ENCODE measurements at regions of chr12 and their contacts with region 1.

Region 1: DNA sequence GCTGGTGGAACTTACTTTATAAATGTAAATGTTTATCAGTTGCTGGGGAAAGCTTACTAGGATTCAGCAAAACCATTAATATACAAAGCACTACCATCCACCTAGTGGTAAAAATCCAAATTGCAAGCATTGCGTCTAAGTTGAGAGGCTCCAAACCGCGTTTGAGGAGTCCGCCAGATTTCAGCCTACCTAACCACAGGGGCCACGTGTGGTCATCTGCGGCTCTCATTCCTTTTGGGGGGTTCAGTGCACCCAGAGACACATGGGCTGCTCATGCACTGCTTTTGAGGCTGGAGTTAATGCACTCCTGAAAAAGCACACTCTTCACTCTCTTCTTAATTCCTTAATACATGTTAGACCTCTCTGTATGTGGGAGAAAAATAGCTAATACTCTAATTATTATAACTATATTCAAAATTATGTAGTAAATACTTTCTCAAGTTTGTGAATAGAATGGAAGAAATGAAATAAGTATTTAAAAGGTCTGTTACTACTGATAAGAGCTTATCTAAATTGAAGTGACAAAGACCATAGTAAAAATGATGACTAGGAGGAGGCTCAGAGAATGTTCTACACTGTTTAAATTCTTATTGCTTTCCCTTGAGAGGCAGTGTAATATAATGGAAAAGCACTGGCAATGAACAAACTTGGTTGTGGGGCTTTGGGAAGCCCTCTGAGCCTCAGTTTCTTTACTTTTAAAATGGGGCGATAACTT is 41.4 kb upstream of the MANSC4 start:
- DNase-seq: peak; percentile 48
- ATAC-seq: peak; percentile 61
- H3K4me3 ChIP-seq: no peak overlapping the region
- H3K27ac ChIP-seq: no peak overlapping the region; the same call in 1 of the 2 replicates
- H3K4me1 ChIP-seq: peaks cover 34% of the 10 kb centered on the region
- H3K27me3 ChIP-seq: 0 out of 4 replicates have a peak, but pooled peaks cover 0 to 2% of the 10 kb centered on the region in 2 experiments
- CTCF ChIP-seq: peak; percentile 63 to 77 (median 71); a peak in 5 of 6 replicates
- EP300 ChIP-seq: no peak
- POLR2A ChIP-seq: no peak
- RAD21 ChIP-seq: peak; percentile 68

Region 2: DNA sequence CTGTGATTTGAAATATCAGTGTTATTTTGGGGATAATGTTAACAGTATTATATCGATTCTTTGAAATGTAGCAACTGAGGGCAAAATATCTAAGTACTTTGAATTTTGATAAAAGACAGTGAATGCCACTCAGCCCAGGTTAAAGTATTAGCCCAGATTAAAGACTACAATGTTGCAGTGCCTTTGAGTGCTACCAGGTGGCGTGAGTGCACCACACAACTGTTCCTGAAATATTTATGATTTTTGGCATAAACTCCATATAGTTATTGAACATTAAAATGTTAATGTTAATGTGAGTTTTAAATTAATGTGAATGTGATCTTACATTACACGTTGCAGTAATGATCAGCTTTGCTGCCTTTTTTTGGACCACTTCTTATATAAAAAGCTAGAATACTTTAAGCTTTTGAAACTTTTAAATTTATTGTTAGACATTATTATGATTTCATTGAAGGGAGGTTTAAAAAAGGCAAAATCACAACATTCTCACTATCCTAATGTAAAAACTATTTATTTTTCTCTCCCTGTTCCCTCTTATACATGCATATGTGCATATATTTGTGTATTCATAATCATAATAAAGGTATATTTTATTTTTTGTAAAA is 88.3 kb before region 1 on chr12:
- CTCF ChIA-PET with region 1: interaction called, 122 read pairs
- POLR2A ChIA-PET with region 1: interaction called, 4 read pairs
- RAD21 ChIA-PET with region 1: interaction called, 43 read pairs
- SMC1A ChIA-PET with region 1: interaction called, 70 read pairs
- in situ Hi-C with region 1: no loop called
- intact Hi-C with region 1: loop called (anchors 1 kb)
- DNase-seq: no peak
- ATAC-seq: peak; percentile 83
- H3K4me3 ChIP-seq: no peak overlapping the region
- H3K27ac ChIP-seq: no peak overlapping the region
- H3K4me1 ChIP-seq: no peaks in the 10 kb centered on the region
- H3K27me3 ChIP-seq: no peaks in the 10 kb centered on the region
- CTCF ChIP-seq: peak; percentile 70 to 86 (median 81)
- EP300 ChIP-seq: no peak
- POLR2A ChIP-seq: no peak
- RAD21 ChIP-seq: peak; percentile 96

Region 3: GRCh38 chr12:27800819-27801218 is 20.6 kb before region 1 on chr12:
- CTCF ChIA-PET with region 1: interaction called, 16 read pairs
- POLR2A ChIA-PET with region 1: no interaction called
- RAD21 ChIA-PET with region 1: no interaction called
- SMC1A ChIA-PET with region 1: interaction called, 4 read pairs
- in situ Hi-C with region 1: no loop called
- intact Hi-C with region 1: no loop called
- DNase-seq: no peak
- ATAC-seq: no peak
- H3K4me3 ChIP-seq: no peak overlapping the region
- H3K27ac ChIP-seq: no peak overlapping the region
- H3K4me1 ChIP-seq: no peaks in the 10 kb centered on the region
- H3K27me3 ChIP-seq: no peaks in the 10 kb centered on the region
- CTCF ChIP-seq: no peak
- EP300 ChIP-seq: no peak
- POLR2A ChIP-seq: no peak
- RAD21 ChIP-seq: no peak

Region 4: DNA sequence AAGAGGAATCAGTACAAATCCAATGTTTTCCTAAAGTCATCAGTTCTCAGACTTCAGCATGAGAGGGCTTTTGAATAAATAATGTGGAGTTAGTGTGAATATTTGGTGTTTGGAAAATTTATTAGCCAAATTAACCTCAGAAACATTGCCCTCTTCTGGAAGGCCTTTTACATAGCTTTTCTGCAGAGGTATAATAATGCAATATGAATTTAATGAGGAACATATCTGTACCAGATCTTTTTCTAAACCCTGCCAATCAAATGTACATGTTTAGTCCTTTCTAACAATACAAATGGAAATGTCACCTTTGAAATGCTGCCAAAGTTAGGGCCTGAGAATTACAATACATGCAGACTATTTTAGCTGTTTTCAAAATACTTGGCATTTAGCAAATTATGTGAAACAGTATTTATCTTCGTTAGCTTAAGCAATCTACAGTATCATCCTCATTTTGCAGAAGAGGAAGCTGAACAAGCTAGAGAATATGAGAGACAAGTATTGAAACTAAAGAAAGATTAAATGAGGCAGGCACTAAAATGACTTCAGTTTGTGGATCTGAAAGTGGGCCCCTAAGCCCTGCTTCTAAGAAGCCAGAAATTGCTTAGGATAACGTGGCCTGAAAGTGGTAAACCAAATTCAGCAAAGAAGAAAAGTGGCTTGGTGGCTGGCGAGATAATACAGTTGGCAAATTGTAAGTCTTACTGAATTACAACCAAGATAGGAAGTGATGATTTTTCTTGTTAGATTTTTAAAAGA is 19.0 kb after region 1 on chr12:
- CTCF ChIA-PET with region 1: interaction called, 21 read pairs
- POLR2A ChIA-PET with region 1: no interaction called
- RAD21 ChIA-PET with region 1: interaction called, 5 read pairs
- SMC1A ChIA-PET with region 1: interaction called, 3 read pairs
- in situ Hi-C with region 1: no loop called
- intact Hi-C with region 1: no loop called
- DNase-seq: no peak
- ATAC-seq: peak; percentile 71
- H3K4me3 ChIP-seq: no peak overlapping the region
- H3K27ac ChIP-seq: no peak overlapping the region; the same call in 1 of the 2 replicates
- H3K4me1 ChIP-seq: peaks cover 12% of the 10 kb centered on the region
- H3K27me3 ChIP-seq: no peaks in the 10 kb centered on the region
- CTCF ChIP-seq: no peak
- EP300 ChIP-seq: no peak
- POLR2A ChIP-seq: no peak
- RAD21 ChIP-seq: no peak

Region 5: GRCh38 chr12:27894309-27894708 is 72.9 kb after region 1 on chr12:
- CTCF ChIA-PET with region 1: no interaction called
- POLR2A ChIA-PET with region 1: no interaction called
- RAD21 ChIA-PET with region 1: no interaction called
- SMC1A ChIA-PET with region 1: interaction called, 4 read pairs
- in situ Hi-C with region 1: no loop called
- intact Hi-C with region 1: loop called (anchors 5 kb)
- DNase-seq: no peak
- ATAC-seq: no peak
- H3K4me3 ChIP-seq: no peak overlapping the region
- H3K27ac ChIP-seq: no peak overlapping the region
- H3K4me1 ChIP-seq: peaks cover 4% of the 10 kb centered on the region; the same call in 1 of the 2 replicates
- H3K27me3 ChIP-seq: no peaks in the 10 kb centered on the region
- CTCF ChIP-seq: no peak
- EP300 ChIP-seq: no peak
- POLR2A ChIP-seq: no peak
- RAD21 ChIP-seq: no peak

Region 6: GRCh38 chr12:27915021-27915420 is 93.6 kb after region 1 on chr12:
- CTCF ChIA-PET with region 1: no interaction called
- POLR2A ChIA-PET with region 1: no interaction called
- RAD21 ChIA-PET with region 1: no interaction called
- SMC1A ChIA-PET with region 1: no interaction called
- in situ Hi-C with region 1: no loop called
- intact Hi-C with region 1: no loop called
- DNase-seq: no peak
- ATAC-seq: no peak
- H3K4me3 ChIP-seq: no peak overlapping the region
- H3K27ac ChIP-seq: no peak overlapping the region
- H3K4me1 ChIP-seq: peaks cover 6% of the 10 kb centered on the region; the same call in 1 of the 2 replicates
- H3K27me3 ChIP-seq: no peaks in the 10 kb centered on the region
- CTCF ChIP-seq: no peak
- EP300 ChIP-seq: no peak
- POLR2A ChIP-seq: no peak
- RAD21 ChIP-seq: no peak

Region 7: GRCh38 chr12:27940756-27941402 is 119.5 kb after region 1 on chr12:
- CTCF ChIA-PET with region 1: interaction called, 28 read pairs
- POLR2A ChIA-PET with region 1: no interaction called
- RAD21 ChIA-PET with region 1: interaction called, 12 read pairs
- SMC1A ChIA-PET with region 1: interaction called, 9 read pairs
- in situ Hi-C with region 1: no loop called
- intact Hi-C with region 1: loop called (anchors 2 kb)
- DNase-seq: peak; percentile 60
- ATAC-seq: peak; percentile 98
- H3K4me3 ChIP-seq: no peak overlapping the region
- H3K27ac ChIP-seq: no peak overlapping the region
- H3K4me1 ChIP-seq: no peaks in the 10 kb centered on the region
- H3K27me3 ChIP-seq: no peaks in the 10 kb centered on the region
- CTCF ChIP-seq: peak; percentile 82 to 91 (median 87)
- EP300 ChIP-seq: no peak
- POLR2A ChIP-seq: no peak
- RAD21 ChIP-seq: peak; percentile 88

Region 8: GRCh38 chr12:27952510-27952909 is 131.1 kb after region 1 on chr12:
- CTCF ChIA-PET with region 1: no interaction called
- POLR2A ChIA-PET with region 1: no interaction called
- RAD21 ChIA-PET with region 1: no interaction called
- SMC1A ChIA-PET with region 1: no interaction called
- in situ Hi-C with region 1: no loop called
- intact Hi-C with region 1: no loop called
- DNase-seq: no peak
- ATAC-seq: no peak
- H3K4me3 ChIP-seq: no peak overlapping the region
- H3K27ac ChIP-seq: no peak overlapping the region
- H3K4me1 ChIP-seq: no peaks in the 10 kb centered on the region
- H3K27me3 ChIP-seq: peaks cover 0 to 2% of the 10 kb centered on the region in 2 experiments; a peak in 2 of 4 replicates
- CTCF ChIP-seq: no peak
- EP300 ChIP-seq: no peak
- POLR2A ChIP-seq: no peak
- RAD21 ChIP-seq: no peak

Region 9: GRCh38 chr12:28872654-28873268 is 1051.3 kb after region 1 on chr12:
- CTCF ChIA-PET with region 1: interaction called, 10 read pairs
- POLR2A ChIA-PET with region 1: no interaction called
- RAD21 ChIA-PET with region 1: no interaction called
- SMC1A ChIA-PET with region 1: no interaction called
- in situ Hi-C with region 1: no loop called
- intact Hi-C with region 1: no loop called
- DNase-seq: no peak
- ATAC-seq: peak; percentile 76
- H3K4me3 ChIP-seq: no peak overlapping the region
- H3K27ac ChIP-seq: no peak overlapping the region
- H3K4me1 ChIP-seq: no peaks in the 10 kb centered on the region
- H3K27me3 ChIP-seq: no peaks in the 10 kb centered on the region
- CTCF ChIP-seq: peak; percentile 72 to 79 (median 74)
- EP300 ChIP-seq: no peak
- POLR2A ChIP-seq: no peak
- RAD21 ChIP-seq: peak; percentile 84

Measured in GM12878 (cell line).